CD4-positive, alpha-beta T cell (primary cell): ENCODE measurements at regions of chr1 and their contacts with region 1.

Region 1: DNA sequence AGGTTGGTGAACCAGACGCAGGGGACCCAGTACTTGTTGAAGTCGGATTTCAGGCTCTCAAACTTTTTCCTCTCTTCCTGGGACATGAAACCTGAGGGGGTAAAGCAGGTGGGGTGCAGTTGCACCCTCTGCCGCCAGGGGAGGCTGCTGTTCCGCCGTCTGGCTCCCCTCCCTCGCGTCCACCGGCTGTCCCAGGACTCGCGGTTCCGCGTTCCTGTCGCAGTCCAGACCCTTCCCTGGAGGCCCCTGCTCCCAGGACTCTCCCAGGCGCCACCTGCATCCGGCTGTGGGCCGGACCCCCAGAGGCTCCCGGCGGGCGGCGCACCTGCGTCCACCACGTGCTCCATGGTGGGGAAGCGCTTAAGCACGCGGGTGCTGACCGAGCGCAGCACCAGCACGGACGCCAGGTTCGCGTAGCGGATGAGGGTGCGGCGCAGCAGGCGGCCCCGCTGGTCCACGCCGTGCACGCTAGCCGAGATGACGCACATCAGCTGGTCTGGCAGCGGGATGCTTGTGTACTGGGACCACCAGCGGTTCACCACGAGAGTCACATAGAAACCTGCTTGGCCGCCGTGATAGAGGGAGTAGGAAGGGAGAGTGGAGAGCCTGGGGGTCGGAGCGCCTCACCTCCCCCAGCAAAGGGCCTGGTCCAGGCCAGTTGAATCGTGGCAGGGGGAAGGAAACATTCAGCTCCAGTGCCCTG is 1.7 kb downstream of the BEST4 start:
- DNase-seq: peak; percentile 64 to 89 (median 74)
- ATAC-seq: peak; percentile 84
- H3K4me3 ChIP-seq: peak overlapping the region; percentile 58
- H3K4me3 Mint-ChIP-seq: peak overlapping the region; percentile 86
- H3K27ac ChIP-seq: peak overlapping the region; percentile 4 to 37
- H3K27ac Mint-ChIP-seq: peak overlapping the region; percentile 53
- H3K4me1 ChIP-seq: peaks cover 35% of the 10 kb centered on the region
- H3K4me1 Mint-ChIP-seq: peaks cover 31% of the 10 kb centered on the region
- H3K27me3 ChIP-seq: no peaks in the 10 kb centered on the region
- H3K27me3 Mint-ChIP-seq: no peaks in the 10 kb centered on the region
- CTCF ChIP-seq: peak; percentile 99

Region 2: GRCh38 chr1:44523593-44524591 is 262.4 kb before region 1 on chr1:
- CTCF ChIA-PET with region 1: no interaction called
- POLR2A ChIA-PET with region 1: no interaction called
- intact Hi-C with region 1: no loop called
- DNase-seq: no peak
- ATAC-seq: no peak
- H3K4me3 ChIP-seq: no peak overlapping the region
- H3K4me3 Mint-ChIP-seq: no peak overlapping the region
- H3K27ac ChIP-seq: no peak overlapping the region
- H3K27ac Mint-ChIP-seq: no peak overlapping the region
- H3K4me1 ChIP-seq: no peaks in the 10 kb centered on the region
- H3K4me1 Mint-ChIP-seq: no peaks in the 10 kb centered on the region
- H3K27me3 ChIP-seq: no peaks in the 10 kb centered on the region
- H3K27me3 Mint-ChIP-seq: no peaks in the 10 kb centered on the region
- CTCF ChIP-seq: no peak

Region 3: GRCh38 chr1:44835738-44836675 is 49.7 kb after region 1 on chr1:
- CTCF ChIA-PET with region 1: no interaction called
- POLR2A ChIA-PET with region 1: interaction called, 3 read pairs
- intact Hi-C with region 1: loop called in 1 of 2 experiments (anchors 5 kb)
- DNase-seq: peak; percentile 77 to 93 (median 84)
- ATAC-seq: peak; percentile 98
- H3K4me3 ChIP-seq: no peak overlapping the region
- H3K4me3 Mint-ChIP-seq: no peak overlapping the region
- H3K27ac ChIP-seq: no peak overlapping the region
- H3K27ac Mint-ChIP-seq: no peak overlapping the region
- H3K4me1 ChIP-seq: peaks cover 9% of the 10 kb centered on the region
- H3K4me1 Mint-ChIP-seq: peaks cover 8% of the 10 kb centered on the region
- H3K27me3 ChIP-seq: no peaks in the 10 kb centered on the region
- H3K27me3 Mint-ChIP-seq: peaks cover 11% of the 10 kb centered on the region
- CTCF ChIP-seq: peak; percentile 91